Sciatic nerve (tissue), 2 donors: ENCODE measurements at regions of chr3 and their contacts with region 1.

Region 1: GRCh38 chr3:117526470-117527079 is 817.0 kb downstream of the TUSC7 start:
- DNase-seq: peak; percentile 63
- ATAC-seq: no peak

Region 2: GRCh38 chr3:116770815-116771450 is 755.6 kb before region 1 on chr3:
- intact Hi-C with region 1: loop called (anchors 10 kb)
- DNase-seq: peak; percentile 69
- ATAC-seq: peak; percentile 65